PC-9 (cell line): ENCODE measurements at regions of chr20 and their contacts with region 1.

Region 1: GRCh38 chr20:50189681-50190582 is 698 bp upstream of the CEBPB start:
- DNase-seq: peak; percentile 70 to 95
- H3K4me3 ChIP-seq: peak overlapping the region; percentile 88; the same call in 1 of the 2 replicates
- H3K27ac ChIP-seq: peak overlapping the region; percentile 99
- H3K4me1 ChIP-seq: peaks cover 44% of the 10 kb centered on the region
- H3K27me3 ChIP-seq: no peaks in the 10 kb centered on the region
- CTCF ChIP-seq: peak; percentile 86

Region 2: DNA sequence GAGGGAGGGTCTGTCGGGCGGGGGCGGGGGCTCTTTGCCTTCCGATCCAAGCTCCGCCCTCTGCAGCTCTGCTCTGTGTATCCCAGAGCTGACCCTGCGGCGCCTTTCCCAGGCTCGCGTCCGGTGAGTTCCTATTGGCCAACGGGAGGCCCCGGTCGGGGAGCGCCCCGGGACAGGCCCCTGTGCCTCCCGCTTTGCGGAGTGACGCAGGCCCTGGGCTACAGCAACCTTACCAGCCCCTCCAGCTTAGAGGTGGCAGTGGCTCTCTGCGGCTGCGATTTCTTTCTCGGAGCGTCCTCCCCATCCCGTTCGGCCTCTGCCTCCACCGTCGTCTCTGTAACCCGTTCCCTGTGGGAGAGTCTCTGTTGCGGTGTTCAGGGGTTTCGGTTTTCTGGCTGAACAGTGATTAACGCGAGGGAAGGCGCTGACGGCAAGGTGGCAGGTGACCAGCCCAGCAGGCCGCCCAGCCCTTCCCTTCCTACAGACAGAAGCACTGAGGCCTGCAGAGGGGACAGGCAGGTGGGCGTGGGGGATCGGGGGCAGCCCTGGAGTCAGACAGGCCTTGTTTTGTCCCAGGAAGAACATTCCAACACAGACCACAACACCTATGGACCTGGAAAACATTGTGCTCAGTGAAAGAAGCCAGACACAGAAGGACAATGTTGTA is 17.5 kb before region 1 on chr20:
- CTCF ChIA-PET with region 1: interaction called, 17 read pairs
- POLR2A ChIA-PET with region 1: no interaction called
- intact Hi-C with region 1: no loop called
- DNase-seq: peak; percentile 74 to 88
- H3K4me3 ChIP-seq: peak overlapping the region; percentile 67
- H3K27ac ChIP-seq: peak overlapping the region; percentile 62
- H3K4me1 ChIP-seq: peaks cover 21% of the 10 kb centered on the region
- H3K27me3 ChIP-seq: no peaks in the 10 kb centered on the region
- CTCF ChIP-seq: no peak

Region 3: DNA sequence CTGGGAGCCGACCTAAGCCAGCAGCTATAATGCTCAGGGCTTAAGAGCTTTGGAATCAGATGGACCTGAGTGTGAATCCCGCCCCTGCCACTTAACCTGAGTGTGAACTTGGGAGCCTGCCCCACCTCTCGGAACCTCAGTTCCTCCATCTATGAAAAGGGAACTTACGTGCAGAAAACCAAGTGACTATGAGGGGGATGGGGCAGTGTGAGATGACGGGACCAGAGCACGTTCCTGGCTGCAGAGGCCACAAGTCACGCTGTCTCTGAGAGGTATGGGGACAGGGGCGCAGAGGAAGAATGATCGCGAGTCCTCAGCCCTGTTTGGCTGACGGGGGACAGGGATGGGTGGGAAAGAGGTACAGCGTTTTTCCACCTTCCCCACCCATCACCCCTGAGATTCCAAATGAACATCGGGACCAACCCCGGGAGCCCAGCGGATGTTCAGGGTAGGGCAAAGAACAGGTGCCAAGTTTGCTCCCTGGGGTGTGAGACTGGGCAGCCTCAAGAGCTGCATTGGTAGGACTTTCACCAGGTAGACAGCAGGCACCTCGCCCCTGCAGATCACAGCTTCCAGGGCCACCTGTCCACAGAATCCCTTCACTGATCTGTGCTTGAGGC is 86.3 kb after region 1 on chr20:
- CTCF ChIA-PET with region 1: no interaction called
- POLR2A ChIA-PET with region 1: interaction called, 11 read pairs
- intact Hi-C with region 1: no loop called
- DNase-seq: no peak
- H3K4me3 ChIP-seq: no peak overlapping the region
- H3K27ac ChIP-seq: no peak overlapping the region
- H3K4me1 ChIP-seq: peaks cover 30% of the 10 kb centered on the region; the same call in 1 of the 2 replicates
- H3K27me3 ChIP-seq: no peaks in the 10 kb centered on the region
- CTCF ChIP-seq: no peak

Region 4: DNA sequence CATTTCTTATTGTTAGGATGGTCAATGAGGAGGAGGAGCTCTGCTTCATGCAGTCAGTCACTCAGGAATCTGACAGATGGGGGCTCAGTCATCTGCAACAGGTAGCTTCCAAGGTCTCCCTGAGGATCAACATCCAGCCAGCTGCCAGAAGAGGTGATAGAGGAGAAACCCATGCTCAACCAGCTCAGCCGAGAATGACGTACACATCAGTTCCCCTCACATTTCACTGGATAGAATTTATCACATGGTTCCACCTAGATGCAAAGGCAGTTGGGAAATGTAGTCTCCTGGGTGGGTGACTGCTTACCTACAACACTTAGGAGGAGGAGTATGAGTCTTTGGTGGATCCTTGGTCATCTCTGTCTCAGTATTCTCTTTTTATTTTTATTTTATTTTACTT is 145.2 kb after region 1 on chr20:
- CTCF ChIA-PET with region 1: interaction called, 4 read pairs
- POLR2A ChIA-PET with region 1: no interaction called
- intact Hi-C with region 1: loop called (anchors 1 kb)
- DNase-seq: peak; percentile 54 to 87
- H3K4me3 ChIP-seq: no peak overlapping the region
- H3K27ac ChIP-seq: peak overlapping the region; percentile 92
- H3K4me1 ChIP-seq: peaks cover 73% of the 10 kb centered on the region
- H3K27me3 ChIP-seq: no peaks in the 10 kb centered on the region
- CTCF ChIP-seq: no peak

Region 5: GRCh38 chr20:50460460-50461267 is 270.7 kb after region 1 on chr20:
- CTCF ChIA-PET with region 1: no interaction called
- POLR2A ChIA-PET with region 1: no interaction called
- intact Hi-C with region 1: loop called (anchors 1 kb)
- DNase-seq: peak; percentile 70 to 90
- H3K4me3 ChIP-seq: no peak overlapping the region
- H3K27ac ChIP-seq: no peak overlapping the region
- H3K4me1 ChIP-seq: peaks cover 43% of the 10 kb centered on the region
- H3K27me3 ChIP-seq: no peaks in the 10 kb centered on the region
- CTCF ChIP-seq: peak; percentile 99

Region 6: DNA sequence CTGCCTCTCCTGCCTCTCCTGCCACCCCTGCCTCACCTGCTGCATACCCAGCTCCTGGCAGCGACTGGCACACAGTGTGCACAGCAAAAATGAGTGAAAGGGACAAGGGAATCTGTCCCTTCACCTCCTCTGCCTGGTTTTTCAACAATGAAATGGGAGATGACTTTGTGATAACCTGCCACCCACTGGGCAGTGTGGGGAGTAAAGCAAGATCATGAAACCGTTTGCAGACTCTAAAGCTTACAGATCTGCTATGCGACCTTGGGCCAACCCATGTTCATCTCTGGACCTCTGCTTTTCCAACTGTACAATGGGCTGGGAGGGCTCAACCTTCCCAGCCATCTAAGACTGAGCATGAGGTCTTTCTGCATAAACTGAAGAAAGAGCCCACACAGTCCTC is 420.3 kb after region 1 on chr20:
- CTCF ChIA-PET with region 1: no interaction called
- POLR2A ChIA-PET with region 1: no interaction called
- intact Hi-C with region 1: no loop called
- DNase-seq: peak in 1 of 2 experiments; percentile 34
- H3K4me3 ChIP-seq: no peak overlapping the region
- H3K27ac ChIP-seq: no peak overlapping the region
- H3K4me1 ChIP-seq: peaks cover 7% of the 10 kb centered on the region
- H3K27me3 ChIP-seq: no peaks in the 10 kb centered on the region
- CTCF ChIP-seq: peak; percentile 42; the same call in 1 of the 2 replicates

Region 7: DNA sequence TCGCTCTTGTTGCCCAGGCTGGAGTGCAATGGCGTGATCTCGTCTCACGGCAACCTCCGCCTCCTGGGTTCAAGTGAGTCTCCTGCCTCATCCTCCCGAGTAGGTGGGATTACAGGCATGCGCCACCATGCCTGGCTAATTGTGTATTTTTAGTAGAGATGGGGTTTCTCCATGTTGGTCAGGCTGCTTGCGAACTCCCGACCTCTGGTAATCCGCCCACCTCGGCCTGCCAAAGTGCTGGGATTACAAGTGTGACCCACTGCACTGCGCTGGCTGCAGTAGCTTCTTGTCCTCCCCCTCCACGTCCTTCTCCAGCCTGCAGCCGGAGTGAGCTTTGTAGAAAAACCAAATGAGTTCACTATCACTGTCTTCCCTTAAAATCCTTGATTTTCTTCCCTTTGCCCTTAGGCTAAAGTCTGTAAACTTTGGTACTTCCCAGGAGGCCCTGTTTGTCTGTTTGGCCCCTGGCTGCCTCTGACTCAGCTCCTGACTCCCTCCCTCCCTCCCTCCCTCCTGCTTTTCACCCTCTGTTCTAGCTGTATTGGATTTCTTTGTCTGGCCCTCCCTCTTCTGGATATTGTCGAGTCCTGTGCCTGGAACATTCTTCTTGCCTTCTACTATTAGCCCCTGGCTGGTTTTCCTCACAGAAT is 554.3 kb after region 1 on chr20:
- CTCF ChIA-PET with region 1: no interaction called
- POLR2A ChIA-PET with region 1: no interaction called
- intact Hi-C with region 1: loop called (anchors 5 kb)
- DNase-seq: peak; percentile 72 to 83
- H3K4me3 ChIP-seq: no peak overlapping the region
- H3K27ac ChIP-seq: peak overlapping the region; percentile 76
- H3K4me1 ChIP-seq: peaks cover 94% of the 10 kb centered on the region
- H3K27me3 ChIP-seq: no peaks in the 10 kb centered on the region
- CTCF ChIP-seq: peak; percentile 68

Region 8: GRCh38 chr20:51008718-51009117 is 818.8 kb after region 1 on chr20:
- CTCF ChIA-PET with region 1: no interaction called
- POLR2A ChIA-PET with region 1: no interaction called
- intact Hi-C with region 1: no loop called
- DNase-seq: no peak
- H3K4me3 ChIP-seq: no peak overlapping the region
- H3K27ac ChIP-seq: no peak overlapping the region
- H3K4me1 ChIP-seq: no peaks in the 10 kb centered on the region
- H3K27me3 ChIP-seq: peaks cover 53% of the 10 kb centered on the region
- CTCF ChIP-seq: no peak